Right ventricle myocardium inferior (tissue), 1 donor: ENCODE measurements at regions of chr17 and their contacts with region 1.

Region 1: DNA sequence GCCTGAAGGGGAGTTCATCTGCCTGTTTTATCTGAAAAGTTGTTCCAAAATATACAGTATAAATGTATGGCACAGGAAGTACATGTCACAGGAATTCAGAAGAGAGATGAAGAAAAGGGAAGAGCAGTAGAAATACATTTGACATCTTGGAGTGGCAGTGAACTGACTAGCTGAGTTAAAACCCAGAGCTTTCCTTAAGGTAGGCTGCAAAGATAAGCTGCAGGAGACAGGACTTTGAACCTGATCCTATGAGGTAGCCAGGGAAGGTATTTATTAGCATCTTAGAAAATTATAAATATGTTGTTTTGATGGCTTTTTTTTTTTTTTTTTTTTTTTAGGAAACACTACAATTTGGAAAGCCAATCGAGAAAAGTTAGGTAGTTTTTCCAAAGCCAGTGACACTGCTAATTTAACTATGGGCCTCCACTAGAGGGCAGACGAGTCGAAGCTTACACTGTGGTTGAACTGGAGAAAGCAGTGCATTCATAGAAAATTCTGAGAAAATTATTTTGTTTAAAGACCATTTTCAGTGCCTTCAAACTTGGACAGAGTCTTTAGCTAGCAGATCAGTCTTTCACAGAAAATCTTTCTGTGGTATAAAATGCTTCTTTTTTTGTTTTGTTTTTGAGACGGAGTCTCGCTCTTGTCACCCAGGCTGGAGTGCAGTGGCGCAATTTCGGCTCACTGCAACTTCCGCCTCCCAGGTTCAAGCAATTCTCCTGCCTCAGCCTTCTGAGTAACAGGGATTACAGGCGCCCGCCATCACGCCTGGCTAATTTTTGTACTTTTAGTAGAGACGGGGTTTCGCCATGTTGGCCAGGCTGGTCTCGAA is 122.3 kb downstream of the SSH2 start:
- DNase-seq: peak; percentile 73
- ATAC-seq: peak; percentile 72

Region 2: GRCh38 chr17:30021708-30022317 is 214.1 kb after region 1 on chr17:
- intact Hi-C with region 1: loop called (anchors 2 kb)
- DNase-seq: no peak
- ATAC-seq: no peak

Region 3: DNA sequence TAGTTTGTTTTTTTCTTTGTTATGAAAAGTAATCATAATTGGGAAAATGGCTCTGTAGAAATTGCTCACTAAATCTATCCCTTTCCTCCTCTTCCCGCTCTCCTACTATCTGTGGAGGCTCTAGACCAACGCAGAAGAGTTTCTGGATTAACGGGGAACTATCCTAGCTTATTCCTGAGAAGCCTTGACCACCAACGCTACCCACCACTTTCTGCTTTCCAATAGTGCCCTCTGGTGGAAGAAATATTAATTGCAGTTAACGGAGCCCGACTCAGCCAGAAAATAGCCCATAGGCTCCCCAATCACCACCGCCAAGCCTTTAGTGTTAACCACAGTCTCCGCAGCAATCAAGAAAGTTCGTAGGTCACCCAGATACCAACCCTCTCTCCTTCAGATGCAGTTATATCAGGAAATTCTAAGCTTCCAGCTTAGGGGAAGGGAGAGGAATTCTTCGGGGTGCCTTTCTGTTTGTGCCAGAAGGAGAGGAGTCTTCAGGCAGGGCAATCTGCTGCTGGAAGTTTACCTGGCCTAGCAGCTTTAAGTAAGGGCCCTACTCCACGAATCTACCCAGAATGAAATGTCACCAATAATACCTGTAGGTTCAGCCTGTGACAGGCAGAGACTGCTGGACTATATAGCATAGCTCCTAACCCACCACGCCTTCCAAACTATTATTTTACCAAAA is 285.9 kb after region 1 on chr17:
- intact Hi-C with region 1: loop called (anchors 10 kb)
- DNase-seq: no peak
- ATAC-seq: peak; percentile 63